PC-9 (cell line): ENCODE measurements at regions of chr6 and their contacts with region 1.

Region 1: GRCh38 chr6:101226626-101227165 is 166.8 kb upstream of the GRIK2 start:
- DNase-seq: peak; percentile 67 to 85
- H3K4me3 ChIP-seq: peak overlapping the region; percentile 13; the same call in 1 of the 2 replicates
- H3K27ac ChIP-seq: peak overlapping the region; percentile 66
- H3K4me1 ChIP-seq: peaks cover 17% of the 10 kb centered on the region
- H3K27me3 ChIP-seq: no peaks in the 10 kb centered on the region
- CTCF ChIP-seq: peak; percentile 85

Region 2: DNA sequence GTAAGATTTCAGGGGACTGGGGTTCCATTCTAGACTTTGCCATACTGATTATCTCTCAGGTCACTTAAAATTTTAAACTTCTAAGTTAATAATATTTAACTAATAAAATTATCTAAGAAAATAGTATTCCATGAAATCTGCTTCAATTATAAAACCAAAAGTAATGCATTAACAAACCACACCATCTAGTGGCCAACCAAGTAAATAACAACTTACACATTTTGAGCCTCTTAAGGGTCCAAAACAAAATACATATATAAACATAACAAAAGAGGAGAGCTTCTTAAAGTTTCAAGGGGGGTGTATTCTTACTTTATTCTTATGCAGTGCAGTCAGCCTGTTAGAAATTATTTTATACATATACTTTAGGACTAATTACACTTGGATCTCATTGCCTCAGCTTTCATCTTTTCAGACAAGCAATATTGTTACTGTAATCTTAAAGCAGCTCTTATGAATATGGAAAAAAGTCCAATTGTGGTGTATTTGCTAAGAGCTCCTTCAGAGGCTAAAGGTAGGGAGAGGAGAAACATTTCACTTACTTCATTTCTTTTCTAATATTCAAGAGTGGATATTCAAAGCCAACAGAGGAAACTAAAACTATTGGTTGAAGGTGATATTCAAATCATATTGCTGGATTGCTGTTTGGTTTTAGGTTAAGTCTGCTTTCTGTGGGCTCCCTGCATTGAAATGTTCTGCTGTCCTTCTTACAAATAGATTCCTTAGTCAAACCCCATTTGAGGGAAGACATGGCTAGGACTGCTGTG is 562.2 kb before region 1 on chr6:
- CTCF ChIA-PET with region 1: no interaction called
- POLR2A ChIA-PET with region 1: no interaction called
- intact Hi-C with region 1: loop called (anchors 5 kb)
- DNase-seq: no peak
- H3K4me3 ChIP-seq: no peak overlapping the region
- H3K27ac ChIP-seq: peak overlapping the region; percentile 69; the same call in 1 of the 2 replicates
- H3K4me1 ChIP-seq: peaks cover 14% of the 10 kb centered on the region
- H3K27me3 ChIP-seq: no peaks in the 10 kb centered on the region
- CTCF ChIP-seq: peak; percentile 82

Region 3: GRCh38 chr6:100678027-100678426 is 548.7 kb before region 1 on chr6:
- CTCF ChIA-PET with region 1: no interaction called
- POLR2A ChIA-PET with region 1: no interaction called
- intact Hi-C with region 1: loop called (anchors 5 kb)
- DNase-seq: no peak
- H3K4me3 ChIP-seq: no peak overlapping the region
- H3K27ac ChIP-seq: no peak overlapping the region
- H3K4me1 ChIP-seq: no peaks in the 10 kb centered on the region
- H3K27me3 ChIP-seq: no peaks in the 10 kb centered on the region
- CTCF ChIP-seq: peak; percentile 36; the same call in 1 of the 2 replicates

Region 4: GRCh38 chr6:101102702-101103101 is 124.0 kb before region 1 on chr6:
- CTCF ChIA-PET with region 1: no interaction called
- POLR2A ChIA-PET with region 1: no interaction called
- intact Hi-C with region 1: no loop called
- DNase-seq: no peak
- H3K4me3 ChIP-seq: no peak overlapping the region
- H3K27ac ChIP-seq: no peak overlapping the region
- H3K4me1 ChIP-seq: no peaks in the 10 kb centered on the region
- H3K27me3 ChIP-seq: no peaks in the 10 kb centered on the region
- CTCF ChIP-seq: no peak

Region 5: DNA sequence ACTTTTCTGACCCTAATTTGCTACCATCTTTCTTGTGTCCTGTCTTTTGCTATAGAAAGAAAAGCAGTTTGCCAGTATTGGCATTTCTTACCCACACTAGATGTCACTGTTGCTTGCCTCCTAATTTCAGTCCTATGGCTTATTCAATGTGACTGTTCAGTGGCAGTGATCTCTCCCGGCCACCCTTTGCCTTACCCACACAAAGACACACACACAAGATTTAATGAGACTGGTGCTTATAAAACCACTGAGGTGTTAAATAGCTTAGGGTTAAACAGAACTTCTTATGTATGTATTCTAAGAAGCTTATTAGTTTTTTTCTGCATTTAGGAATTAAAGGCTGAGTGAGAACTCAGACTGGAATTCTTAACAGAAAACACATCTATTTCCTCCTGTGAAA is 112.0 kb before region 1 on chr6:
- CTCF ChIA-PET with region 1: no interaction called
- POLR2A ChIA-PET with region 1: no interaction called
- intact Hi-C with region 1: loop called (anchors 2 kb)
- DNase-seq: peak in 1 of 2 experiments; percentile 4
- H3K4me3 ChIP-seq: no peak overlapping the region
- H3K27ac ChIP-seq: no peak overlapping the region
- H3K4me1 ChIP-seq: no peaks in the 10 kb centered on the region
- H3K27me3 ChIP-seq: no peaks in the 10 kb centered on the region
- CTCF ChIP-seq: peak; percentile 70